ENCODE measurements at regions of chr13 and their contacts with region 1.

Region 1: DNA sequence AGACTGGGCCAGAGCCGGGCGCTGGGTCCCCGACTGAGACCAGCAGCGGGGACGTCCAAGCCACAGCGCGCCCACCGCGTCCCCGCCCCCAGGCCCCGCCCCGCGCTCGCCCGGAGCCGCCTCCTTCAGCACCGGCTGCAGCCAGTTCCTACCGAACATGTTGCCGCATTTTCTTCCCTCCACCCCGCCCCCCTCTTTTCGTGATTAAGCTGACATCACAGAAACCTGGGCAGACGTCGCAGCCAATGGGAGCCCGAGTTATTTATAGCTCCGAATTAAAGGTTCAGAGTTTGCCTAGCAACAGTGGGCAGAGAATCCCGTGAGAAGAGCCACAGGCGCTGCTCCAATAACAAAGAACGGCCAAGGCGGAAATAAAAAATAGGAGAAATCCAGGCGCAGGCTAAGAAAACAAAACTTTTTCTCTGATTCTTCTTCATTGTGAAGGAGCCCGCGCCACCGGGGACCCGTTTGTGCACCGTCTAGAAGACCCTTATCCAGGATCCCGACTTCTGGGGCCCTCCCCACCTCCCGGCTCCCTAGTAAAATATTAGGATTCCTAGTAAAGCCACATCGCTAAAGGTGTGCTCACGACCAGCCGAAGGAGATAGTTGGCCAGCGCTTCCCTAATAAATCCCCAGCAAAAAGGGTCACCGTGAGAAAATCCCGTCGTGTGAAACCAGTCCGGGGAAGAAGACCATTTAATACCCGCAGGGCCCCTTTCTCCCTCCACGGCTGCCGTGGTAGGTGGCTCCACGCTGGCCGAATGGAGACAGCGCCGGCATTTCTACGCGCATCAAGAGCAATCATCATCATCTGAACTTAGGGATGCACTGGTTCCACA is 61.7 kb downstream of the SERP2 start:
- DNase-seq: peak; percentile 19
- ATAC-seq: peak; percentile 86
- H3K4me3 ChIP-seq: peak overlapping the region; percentile 45; the same call in 1 of the 2 replicates
- H3K27ac ChIP-seq: peak overlapping the region; percentile 54; the same call in 1 of the 2 replicates
- H3K4me1 ChIP-seq: peaks cover 5% of the 10 kb centered on the region
- H3K27me3 ChIP-seq: peaks cover 5 to 15% of the 10 kb centered on the region in 2 experiments
- CTCF ChIP-seq: no peak
- EP300 ChIP-seq: no peak
- POLR2A ChIP-seq: no peak; the same call in 1 of the 2 replicates
- RAD21 ChIP-seq: no peak

Region 2: GRCh38 chr13:44050450-44051063 is 384.8 kb before region 1 on chr13:
- CTCF ChIA-PET with region 1: interaction called, 7 read pairs
- POLR2A ChIA-PET with region 1: no interaction called
- RAD21 ChIA-PET with region 1: interaction called, 3 read pairs
- SMC1A ChIA-PET with region 1: interaction called, 4 read pairs
- in situ Hi-C with region 1: loop called (anchors 5 kb)
- intact Hi-C with region 1: loop called (anchors 1 kb)
- DNase-seq: no peak
- ATAC-seq: no peak
- H3K4me3 ChIP-seq: no peak overlapping the region
- H3K27ac ChIP-seq: no peak overlapping the region
- H3K4me1 ChIP-seq: no peaks in the 10 kb centered on the region
- H3K27me3 ChIP-seq: peaks cover 0 to 3% of the 10 kb centered on the region in 2 experiments; a peak in 1 of 4 replicates
- CTCF ChIP-seq: peak; percentile 41 to 49 (median 44); a peak in 5 of 6 replicates
- EP300 ChIP-seq: no peak
- POLR2A ChIP-seq: no peak
- RAD21 ChIP-seq: peak; percentile 65

Region 3: GRCh38 chr13:44191504-44192171 is 243.7 kb before region 1 on chr13:
- CTCF ChIA-PET with region 1: interaction called, 3 read pairs
- POLR2A ChIA-PET with region 1: no interaction called
- RAD21 ChIA-PET with region 1: interaction called, 3 read pairs
- SMC1A ChIA-PET with region 1: interaction called, 3 read pairs
- in situ Hi-C with region 1: loop called (anchors 5 kb)
- intact Hi-C with region 1: loop called (anchors 1 kb)
- DNase-seq: no peak
- ATAC-seq: peak; percentile 80
- H3K4me3 ChIP-seq: no peak overlapping the region
- H3K27ac ChIP-seq: no peak overlapping the region
- H3K4me1 ChIP-seq: no peaks in the 10 kb centered on the region
- H3K27me3 ChIP-seq: no peaks in the 10 kb centered on the region; a peak in 2 of 4 replicates
- CTCF ChIP-seq: peak; percentile 35 to 55 (median 41); a peak in 5 of 6 replicates
- EP300 ChIP-seq: no peak
- POLR2A ChIP-seq: no peak
- RAD21 ChIP-seq: peak; percentile 61

Region 4: DNA sequence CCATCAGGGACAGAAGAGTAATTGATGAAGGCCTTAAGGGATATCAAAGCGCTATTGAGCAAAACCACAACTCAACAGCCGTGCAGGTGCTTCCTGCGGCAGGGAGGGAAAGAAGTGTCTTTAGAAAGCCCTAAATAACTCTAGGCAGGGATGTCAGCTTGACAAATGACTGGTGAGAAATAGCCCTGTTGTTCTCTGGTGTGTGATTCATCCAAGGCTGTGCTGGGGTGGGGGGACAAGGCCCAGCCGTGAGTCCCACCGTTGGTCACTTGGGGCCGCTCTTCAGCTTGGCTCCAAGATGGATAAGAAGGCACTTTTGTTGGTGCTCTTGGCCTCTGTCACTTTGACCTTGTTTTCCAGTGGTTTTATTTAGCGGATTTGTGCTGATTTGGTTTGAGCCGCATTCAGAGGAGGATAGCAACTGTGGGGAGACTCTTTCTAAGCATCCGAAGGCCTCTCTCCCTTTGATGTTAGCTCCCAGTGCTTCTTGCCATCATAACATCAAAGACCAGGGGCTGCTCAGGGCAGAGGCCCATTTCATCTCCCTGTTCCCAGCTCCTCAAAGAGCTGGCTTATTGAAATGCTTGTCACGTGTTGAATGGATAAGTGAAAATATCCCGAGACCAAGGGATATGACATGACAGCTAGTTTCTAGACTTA is 192.0 kb before region 1 on chr13:
- CTCF ChIA-PET with region 1: interaction called, 3 read pairs
- POLR2A ChIA-PET with region 1: no interaction called
- RAD21 ChIA-PET with region 1: no interaction called
- SMC1A ChIA-PET with region 1: no interaction called
- in situ Hi-C with region 1: no loop called
- intact Hi-C with region 1: loop called (anchors 5 kb)
- DNase-seq: no peak
- ATAC-seq: peak; percentile 70
- H3K4me3 ChIP-seq: no peak overlapping the region
- H3K27ac ChIP-seq: no peak overlapping the region
- H3K4me1 ChIP-seq: peaks cover 5% of the 10 kb centered on the region; the same call in 1 of the 2 replicates
- H3K27me3 ChIP-seq: no peaks in the 10 kb centered on the region
- CTCF ChIP-seq: peak; percentile 27 to 41 (median 30); a peak in 4 of 6 replicates
- EP300 ChIP-seq: no peak
- POLR2A ChIP-seq: no peak
- RAD21 ChIP-seq: peak; percentile 75

Region 5: DNA sequence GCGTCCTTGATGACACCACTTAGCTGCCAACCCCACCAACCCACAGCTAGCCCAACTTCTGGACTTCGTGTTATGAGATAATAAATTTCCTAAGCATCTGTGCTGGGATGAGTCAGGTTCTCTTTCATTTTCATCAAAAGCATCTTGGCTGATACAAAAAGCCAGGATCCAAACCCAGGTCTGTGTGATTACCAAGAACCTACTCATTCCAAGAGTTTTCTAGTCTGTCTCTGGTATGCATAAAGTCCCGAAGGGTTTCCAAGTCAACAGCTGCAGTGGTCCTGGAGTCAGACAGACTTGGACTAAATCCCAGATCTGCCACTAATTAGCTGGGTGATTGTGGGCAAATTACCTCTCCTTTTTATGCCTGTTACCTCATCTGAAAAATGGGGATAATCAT is 117.2 kb before region 1 on chr13:
- CTCF ChIA-PET with region 1: no interaction called
- POLR2A ChIA-PET with region 1: no interaction called
- RAD21 ChIA-PET with region 1: no interaction called
- SMC1A ChIA-PET with region 1: no interaction called
- in situ Hi-C with region 1: no loop called
- intact Hi-C with region 1: no loop called
- DNase-seq: no peak
- ATAC-seq: no peak
- H3K4me3 ChIP-seq: no peak overlapping the region
- H3K27ac ChIP-seq: no peak overlapping the region
- H3K4me1 ChIP-seq: no peaks in the 10 kb centered on the region
- H3K27me3 ChIP-seq: no peaks in the 10 kb centered on the region
- CTCF ChIP-seq: no peak
- EP300 ChIP-seq: no peak
- POLR2A ChIP-seq: no peak
- RAD21 ChIP-seq: no peak

Region 6: GRCh38 chr13:44710576-44710975 is 275.2 kb after region 1 on chr13:
- CTCF ChIA-PET with region 1: no interaction called
- POLR2A ChIA-PET with region 1: no interaction called
- RAD21 ChIA-PET with region 1: no interaction called
- SMC1A ChIA-PET with region 1: no interaction called
- in situ Hi-C with region 1: no loop called
- intact Hi-C with region 1: no loop called
- DNase-seq: peak; percentile 5
- ATAC-seq: peak; percentile 90
- H3K4me3 ChIP-seq: no peak overlapping the region
- H3K27ac ChIP-seq: no peak overlapping the region
- H3K4me1 ChIP-seq: peaks cover 6% of the 10 kb centered on the region
- H3K27me3 ChIP-seq: no peaks in the 10 kb centered on the region
- CTCF ChIP-seq: no peak
- EP300 ChIP-seq: no peak
- POLR2A ChIP-seq: no peak
- RAD21 ChIP-seq: no peak

Measured in GM12878 (cell line).